Mammary epithelial cell (primary cell): ENCODE measurements at regions of chr18 and their contacts with region 1.

Region 1: DNA sequence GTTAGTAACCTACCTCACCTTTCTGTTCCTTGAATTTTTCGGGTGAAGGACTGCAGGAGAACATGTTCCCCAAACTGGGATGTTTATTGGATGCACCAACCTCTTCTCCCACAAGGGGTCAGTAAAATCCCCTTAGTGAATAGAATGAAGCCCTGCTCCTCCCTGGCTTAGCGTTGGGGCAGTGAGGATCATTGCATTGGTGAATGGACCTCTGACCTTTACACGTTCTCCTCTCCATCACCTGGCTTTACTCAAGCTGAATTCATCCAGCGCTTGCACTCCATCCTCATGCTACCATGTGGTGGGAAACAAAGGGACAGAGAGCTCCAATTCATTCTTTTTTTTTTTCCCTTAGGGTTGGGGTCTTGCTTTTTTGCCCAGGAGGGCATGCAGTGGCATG is 157.2 kb downstream of the MIB1 start:
- DNase-seq: peak; percentile 39
- H3K4me3 ChIP-seq: no peak overlapping the region
- H3K27ac ChIP-seq: no peak overlapping the region
- H3K4me1 ChIP-seq: no peaks in the 10 kb centered on the region
- H3K27me3 ChIP-seq: no peaks in the 10 kb centered on the region
- CTCF ChIP-seq: peak; percentile 86 to 90

Region 2: DNA sequence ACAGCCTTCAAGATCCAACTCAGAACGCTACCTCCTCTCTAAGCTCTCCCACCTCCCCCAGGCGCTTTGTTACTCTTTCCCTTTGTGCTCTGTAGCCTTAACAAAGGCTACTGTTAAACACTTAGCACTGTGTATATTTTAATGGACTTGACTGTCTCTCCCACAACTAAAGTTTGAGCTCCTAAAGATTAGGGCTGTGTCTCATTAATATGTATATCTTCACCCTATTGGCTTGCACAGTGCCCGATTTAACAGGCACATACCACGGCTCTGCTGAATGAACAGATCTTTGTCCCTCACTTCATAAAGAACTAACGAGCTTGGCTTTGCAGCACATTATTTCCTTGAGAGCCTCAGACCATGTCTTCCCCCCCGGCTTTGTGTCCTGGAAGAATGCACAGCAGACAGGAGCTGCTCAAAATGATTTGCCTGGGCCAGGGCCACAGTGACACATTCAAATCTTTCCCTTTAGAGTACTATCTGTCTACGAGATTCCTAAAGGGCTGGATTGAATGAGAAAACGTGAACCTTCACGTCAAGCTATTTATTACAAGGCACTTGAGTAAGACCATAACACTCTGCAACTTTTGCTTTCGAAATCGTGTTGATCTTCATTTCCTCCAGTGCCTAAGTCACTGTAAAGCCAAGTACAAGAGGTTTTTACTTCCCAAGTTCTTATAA is 215.3 kb before region 1 on chr18:
- CTCF ChIA-PET with region 1: no interaction called
- dilution Hi-C with region 1: no loop called
- in situ Hi-C with region 1: no loop called
- intact Hi-C with region 1: no loop called
- DNase-seq: peak; percentile 11
- H3K4me3 ChIP-seq: no peak overlapping the region
- H3K27ac ChIP-seq: no peak overlapping the region
- H3K4me1 ChIP-seq: no peaks in the 10 kb centered on the region
- H3K27me3 ChIP-seq: no peaks in the 10 kb centered on the region
- CTCF ChIP-seq: no peak

Region 3: GRCh38 chr18:21777814-21778213 is 120.0 kb before region 1 on chr18:
- CTCF ChIA-PET with region 1: no interaction called
- dilution Hi-C with region 1: no loop called
- in situ Hi-C with region 1: no loop called
- intact Hi-C with region 1: no loop called
- DNase-seq: no peak
- H3K4me3 ChIP-seq: no peak overlapping the region
- H3K27ac ChIP-seq: no peak overlapping the region
- H3K4me1 ChIP-seq: no peaks in the 10 kb centered on the region
- H3K27me3 ChIP-seq: no peaks in the 10 kb centered on the region
- CTCF ChIP-seq: no peak

Region 4: GRCh38 chr18:22703883-22704585 is 806.2 kb after region 1 on chr18:
- CTCF ChIA-PET with region 1: no interaction called
- dilution Hi-C with region 1: no loop called
- in situ Hi-C with region 1: no loop called
- intact Hi-C with region 1: loop called (anchors 5 kb)
- DNase-seq: peak; percentile 43
- H3K4me3 ChIP-seq: no peak overlapping the region
- H3K27ac ChIP-seq: no peak overlapping the region
- H3K4me1 ChIP-seq: peaks cover 3% of the 10 kb centered on the region
- H3K27me3 ChIP-seq: no peaks in the 10 kb centered on the region
- CTCF ChIP-seq: peak; percentile 74 to 78